Esophagus muscularis mucosa (tissue), 4 donors: ENCODE measurements at regions of chr4 and their contacts with region 1.

Region 1: DNA sequence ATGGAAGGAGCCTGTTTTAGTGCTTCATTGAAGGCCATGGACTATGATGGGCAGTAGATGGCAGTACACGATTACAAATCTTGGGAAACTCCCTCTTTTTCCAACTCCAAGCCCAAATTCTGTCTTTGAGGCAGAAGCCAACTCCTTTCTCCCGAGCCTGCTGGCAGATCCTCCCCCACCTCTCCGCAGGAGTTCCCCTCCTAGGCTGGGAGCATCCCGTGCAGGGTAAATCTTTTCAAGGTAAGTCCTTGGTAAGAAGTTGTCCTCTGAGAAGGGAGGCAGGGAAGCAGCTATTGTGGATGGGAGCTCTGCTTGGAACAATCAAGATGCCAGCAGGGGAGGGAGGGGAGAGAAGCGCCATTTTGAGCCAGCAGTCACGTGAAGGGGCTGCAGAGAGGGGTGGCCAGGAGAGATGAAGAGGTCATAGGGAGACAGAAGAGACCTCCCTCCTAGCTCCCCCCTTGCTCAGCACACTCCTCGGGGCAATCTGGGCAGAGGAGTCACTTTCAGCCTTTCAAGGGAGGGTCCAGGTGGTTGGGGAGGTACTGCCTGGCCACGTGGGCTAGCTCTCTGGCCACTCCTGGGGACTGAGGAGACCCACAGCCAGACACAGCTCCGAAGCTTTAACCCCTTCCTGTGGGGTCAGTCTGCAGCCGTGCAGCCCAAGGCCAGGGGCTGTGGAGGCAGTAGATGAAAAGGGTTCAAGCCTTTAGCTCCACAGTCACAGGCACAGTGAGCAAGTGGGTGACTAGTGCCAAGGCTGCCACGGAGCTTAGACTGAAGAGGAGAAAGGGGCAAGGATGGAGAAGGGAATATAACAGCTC is 9.6 kb downstream of the CC2D2A start:
- DNase-seq: no peak
- H3K4me3 ChIP-seq: peak overlapping the region; percentile 47 to 58 (median 50)
- H3K27ac ChIP-seq: peak overlapping the region; percentile 72 to 81 (median 78)
- H3K4me1 ChIP-seq: peaks cover 5 to 36% (median 26%) of the 10 kb centered on the region in 4 donors
- H3K27me3 ChIP-seq: no peaks in the 10 kb centered on the region
- CTCF ChIP-seq: peak; percentile 66 to 70 (median 67)
- EP300 ChIP-seq: no peak
- POLR2A ChIP-seq: no peak

Region 2: GRCh38 chr4:15649914-15650545 is 170.7 kb after region 1 on chr4:
- intact Hi-C with region 1: loop called (anchors 2 kb)
- DNase-seq: no peak
- H3K4me3 ChIP-seq: peak overlapping the region in 1 of 4 donors; percentile 9
- H3K27ac ChIP-seq: peak overlapping the region; percentile 34 to 99 (median 96)
- H3K4me1 ChIP-seq: peaks cover 55 to 88% (median 86%) of the 10 kb centered on the region in 4 donors
- H3K27me3 ChIP-seq: no peaks in the 10 kb centered on the region
- CTCF ChIP-seq: peak; percentile 65 to 79 (median 70)
- EP300 ChIP-seq: no peak
- POLR2A ChIP-seq: no peak

Region 3: GRCh38 chr4:16120720-16121119 is 641.4 kb after region 1 on chr4:
- intact Hi-C with region 1: no loop called
- DNase-seq: no peak
- H3K4me3 ChIP-seq: no peak overlapping the region
- H3K27ac ChIP-seq: no peak overlapping the region
- H3K4me1 ChIP-seq: peaks cover 0 to 20% (median 9%) of the 10 kb centered on the region in 4 donors
- H3K27me3 ChIP-seq: no peaks in the 10 kb centered on the region
- CTCF ChIP-seq: no peak
- EP300 ChIP-seq: no peak
- POLR2A ChIP-seq: no peak

Region 4: GRCh38 chr4:16205298-16206164 is 726.2 kb after region 1 on chr4:
- intact Hi-C with region 1: loop called (anchors 10 kb)
- DNase-seq: no peak
- H3K4me3 ChIP-seq: no peak overlapping the region
- H3K27ac ChIP-seq: no peak overlapping the region
- H3K4me1 ChIP-seq: peaks cover 7 to 48% (median 41%) of the 10 kb centered on the region in 4 donors
- H3K27me3 ChIP-seq: no peaks in the 10 kb centered on the region
- CTCF ChIP-seq: peak; percentile 34 to 57 (median 36)
- EP300 ChIP-seq: no peak
- POLR2A ChIP-seq: no peak